HEK293 (cell line): ENCODE measurements at regions of chr11 and their contacts with region 1.

Region 1: DNA sequence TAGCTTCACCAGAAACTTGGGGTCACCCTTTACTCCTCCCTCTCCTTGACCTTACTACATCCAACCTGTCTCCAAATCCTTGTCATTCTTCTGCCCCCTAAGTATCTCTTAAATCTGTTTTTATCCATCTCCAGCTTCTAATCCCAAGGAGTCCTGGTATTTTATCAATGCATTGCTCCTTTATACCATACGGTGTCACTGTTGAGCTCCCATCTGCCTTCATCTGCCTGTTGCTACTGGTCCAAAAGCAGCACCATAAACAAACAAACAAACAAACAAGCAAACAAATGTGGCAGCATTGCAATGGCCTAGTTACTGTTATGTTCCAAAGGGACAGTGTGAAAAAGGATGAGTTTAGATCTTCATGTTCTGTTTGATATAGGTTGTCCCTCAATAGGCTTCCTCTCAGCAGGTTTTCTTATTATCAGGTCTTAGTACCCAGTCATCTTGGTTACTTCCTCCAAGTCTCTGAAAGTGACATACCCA is 34.2 kb downstream of the DNHD1 start:
- H3K4me3 ChIP-seq: no peak overlapping the region
- H3K27ac ChIP-seq: no peak overlapping the region
- H3K4me1 ChIP-seq: no peaks in the 10 kb centered on the region
- CTCF ChIP-seq: 0 out of 2 replicates have a peak, but pooled peaks have one; percentile 43

Region 2: DNA sequence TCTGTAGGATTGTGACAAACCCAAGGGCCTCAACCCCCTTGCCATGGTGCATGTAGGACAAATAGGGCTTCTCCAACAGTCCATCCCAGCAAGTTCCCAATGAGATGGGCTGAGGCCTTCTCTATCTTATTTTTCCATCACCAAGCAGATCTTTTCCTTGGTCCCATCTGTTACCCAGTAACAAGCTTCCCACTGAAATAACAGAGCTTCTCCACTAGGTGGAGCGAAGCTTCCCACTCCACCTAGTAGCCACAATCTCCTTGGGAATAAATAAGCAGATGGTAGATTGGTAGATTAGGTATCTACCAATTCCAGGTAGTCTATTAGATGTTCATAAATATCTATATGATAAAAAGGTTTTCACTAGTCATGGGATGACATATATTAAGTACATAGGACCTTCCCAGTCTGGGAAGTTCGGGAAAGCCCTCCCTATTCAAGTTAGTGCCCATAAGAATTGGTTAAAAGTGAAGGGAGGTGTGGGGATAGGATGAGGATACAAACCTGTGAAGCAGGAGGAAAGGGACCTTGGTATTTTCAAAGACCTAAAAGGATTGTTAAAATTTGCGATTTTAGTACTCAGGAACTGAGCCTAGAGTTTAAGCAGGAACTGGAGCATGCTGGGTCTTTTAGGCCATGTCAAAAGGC is 538.6 kb before region 1 on chr11:
- CTCF ChIA-PET with region 1: no interaction called
- POLR2A ChIA-PET with region 1: no interaction called
- H3K4me3 ChIP-seq: no peak overlapping the region
- H3K27ac ChIP-seq: no peak overlapping the region
- H3K4me1 ChIP-seq: no peaks in the 10 kb centered on the region
- CTCF ChIP-seq: no peak

Region 3: GRCh38 chr11:6175440-6175839 is 355.9 kb before region 1 on chr11:
- CTCF ChIA-PET with region 1: no interaction called
- POLR2A ChIA-PET with region 1: no interaction called
- H3K4me3 ChIP-seq: no peak overlapping the region
- H3K27ac ChIP-seq: no peak overlapping the region
- H3K4me1 ChIP-seq: no peaks in the 10 kb centered on the region
- CTCF ChIP-seq: no peak

Region 4: GRCh38 chr11:6234387-6235107 is 296.8 kb before region 1 on chr11 and contains the start of gene FHIP1B:
- CTCF ChIA-PET with region 1: no interaction called
- POLR2A ChIA-PET with region 1: no interaction called
- H3K4me3 ChIP-seq: peak within 1 kb of the TSS; percentile 97
- H3K27ac ChIP-seq: peak within 1 kb of the TSS; percentile 47; the same call in 1 of the 2 replicates
- H3K4me1 ChIP-seq: no peaks in the 10 kb centered on the region
- CTCF ChIP-seq: no peak

Region 5: GRCh38 chr11:6443269-6444003 is 87.9 kb before region 1 on chr11:
- CTCF ChIA-PET with region 1: interaction called, 10 read pairs
- POLR2A ChIA-PET with region 1: no interaction called
- H3K4me3 ChIP-seq: no peak overlapping the region
- H3K27ac ChIP-seq: no peak overlapping the region
- H3K4me1 ChIP-seq: no peaks in the 10 kb centered on the region
- CTCF ChIP-seq: 0 out of 2 replicates have a peak, but pooled peaks have one; percentile 25

Region 6: DNA sequence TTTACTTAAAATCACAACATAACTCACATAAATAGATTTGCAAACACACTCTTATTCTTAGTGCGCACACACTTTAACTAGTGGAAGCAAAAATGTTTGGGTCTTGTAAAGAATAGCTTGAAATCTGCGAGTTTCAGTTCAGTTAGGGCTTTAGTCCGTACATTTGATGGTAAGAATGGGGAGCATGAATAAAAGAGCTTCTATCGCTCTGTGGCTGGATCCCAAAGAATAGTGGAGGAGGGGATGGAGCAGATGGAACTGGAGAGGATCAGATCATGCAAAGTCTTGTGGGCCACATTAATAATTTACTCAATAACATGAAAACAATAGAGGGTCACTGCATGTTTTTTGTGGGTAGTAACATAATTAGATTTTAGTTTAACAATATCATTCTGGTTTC is 10.0 kb after region 1 on chr11:
- CTCF ChIA-PET with region 1: interaction called, 23 read pairs
- POLR2A ChIA-PET with region 1: no interaction called
- H3K4me3 ChIP-seq: no peak overlapping the region
- H3K27ac ChIP-seq: no peak overlapping the region
- H3K4me1 ChIP-seq: no peaks in the 10 kb centered on the region
- CTCF ChIP-seq: no peak

Region 7: GRCh38 chr11:6594142-6594768 is 62.9 kb after region 1 on chr11:
- CTCF ChIA-PET with region 1: interaction called, 10 read pairs
- POLR2A ChIA-PET with region 1: no interaction called
- H3K4me3 ChIP-seq: no peak overlapping the region
- H3K27ac ChIP-seq: no peak overlapping the region
- H3K4me1 ChIP-seq: no peaks in the 10 kb centered on the region
- CTCF ChIP-seq: no peak

Region 8: GRCh38 chr11:6705905-6706535 is 174.7 kb after region 1 on chr11:
- CTCF ChIA-PET with region 1: interaction called, 44 read pairs
- POLR2A ChIA-PET with region 1: no interaction called
- H3K4me3 ChIP-seq: no peak overlapping the region
- H3K27ac ChIP-seq: no peak overlapping the region
- H3K4me1 ChIP-seq: no peaks in the 10 kb centered on the region
- CTCF ChIP-seq: peak; percentile 18; the same call in 1 of the 2 replicates

Region 9: DNA sequence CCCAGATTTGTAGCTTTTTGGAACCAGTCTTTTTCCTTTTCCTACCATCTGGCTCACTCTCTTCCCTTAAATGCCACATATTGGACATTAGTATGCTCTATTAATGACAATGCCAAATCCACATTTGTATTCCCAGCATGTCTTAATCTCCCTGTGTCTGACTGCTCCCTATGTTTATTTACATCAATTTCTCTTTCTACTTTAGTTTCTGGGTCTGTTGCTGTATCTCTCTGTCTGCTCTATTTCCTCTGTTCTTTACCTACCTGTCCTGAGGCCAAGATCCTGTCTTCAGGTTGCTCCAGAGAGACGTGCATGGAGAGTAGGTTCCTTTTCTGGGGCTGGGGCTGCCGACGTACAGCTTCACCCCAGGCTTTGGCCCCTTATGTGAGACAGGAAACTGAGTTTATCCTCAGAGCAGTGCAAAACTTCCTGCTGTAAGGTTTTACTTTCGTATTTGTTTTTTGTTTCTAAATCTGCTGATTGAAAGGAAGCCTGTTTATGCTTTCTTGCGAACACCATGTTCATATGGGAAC is 214.8 kb after region 1 on chr11:
- CTCF ChIA-PET with region 1: no interaction called
- POLR2A ChIA-PET with region 1: no interaction called
- H3K4me3 ChIP-seq: no peak overlapping the region
- H3K27ac ChIP-seq: no peak overlapping the region
- H3K4me1 ChIP-seq: no peaks in the 10 kb centered on the region
- CTCF ChIP-seq: no peak

Region 10: DNA sequence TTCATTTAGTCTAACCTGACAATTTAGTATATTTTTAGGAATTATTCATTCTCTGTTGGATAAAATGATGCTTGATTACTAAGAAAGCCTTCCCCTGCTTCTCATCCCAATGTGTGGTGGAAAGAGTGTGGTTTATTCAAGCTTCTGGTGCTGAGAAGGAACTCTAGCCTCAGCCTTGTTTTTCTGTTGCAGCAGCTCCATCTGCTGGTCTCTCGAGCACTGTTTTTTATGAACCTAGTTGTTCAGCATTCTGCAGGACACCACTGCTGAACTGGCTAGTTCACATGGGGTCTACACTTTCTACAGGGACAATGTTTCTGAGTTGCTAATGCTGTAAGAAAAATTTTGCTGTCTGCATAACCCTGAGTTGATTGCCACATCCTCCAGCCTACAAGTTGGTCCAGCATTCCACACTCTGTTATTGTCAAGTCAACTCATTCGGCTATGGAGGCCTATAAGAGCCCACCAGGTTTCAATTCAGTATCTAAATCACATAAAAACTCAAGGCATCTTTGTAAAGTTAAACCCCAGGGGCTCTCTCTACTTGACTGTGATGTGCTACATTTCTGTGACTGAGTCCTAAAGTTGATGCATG is 226.2 kb after region 1 on chr11:
- CTCF ChIA-PET with region 1: interaction called, 12 read pairs
- POLR2A ChIA-PET with region 1: no interaction called
- H3K4me3 ChIP-seq: no peak overlapping the region
- H3K27ac ChIP-seq: no peak overlapping the region
- H3K4me1 ChIP-seq: no peaks in the 10 kb centered on the region
- CTCF ChIP-seq: peak; percentile 23; the same call in 1 of the 2 replicates